Caco-2 (cell line): ENCODE measurements at regions of chrX and their contacts with region 1.

Region 1: GRCh38 chrX:135050603-135051002 is 1.3 kb downstream of the RTL8A start:
- DNase-seq: no peak
- H3K4me3 ChIP-seq: no peak overlapping the region; the same call in 1 of the 2 replicates
- H3K4me3 Mint-ChIP-seq: peak overlapping the region; percentile 96
- H3K27ac Mint-ChIP-seq: peak overlapping the region; percentile 90
- H3K4me1 ChIP-seq: 0 out of 2 replicates have a peak, but pooled peaks cover 4% of the 10 kb centered on the region
- H3K4me1 Mint-ChIP-seq: peaks cover 15% of the 10 kb centered on the region
- H3K27me3 ChIP-seq: no peaks in the 10 kb centered on the region
- H3K27me3 Mint-ChIP-seq: no peaks in the 10 kb centered on the region
- CTCF ChIP-seq: no peak

Region 2: DNA sequence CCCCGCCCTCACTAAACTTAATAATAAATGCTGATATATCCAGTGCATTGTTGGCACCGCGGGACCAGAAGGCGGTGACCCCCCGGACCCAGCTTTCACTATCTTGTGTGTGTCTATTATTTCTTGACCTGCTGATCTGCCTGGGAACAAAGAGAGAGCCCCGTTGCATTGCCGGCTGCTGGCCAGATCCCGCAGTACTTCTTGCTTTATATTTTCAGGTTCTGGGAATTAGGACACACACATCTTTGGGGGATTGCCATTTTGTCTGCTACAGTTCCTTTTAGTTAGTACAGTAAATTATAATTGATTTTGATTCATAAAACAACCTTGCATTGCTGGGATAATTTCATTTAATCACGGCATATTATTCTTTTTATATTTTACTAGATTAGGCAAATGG is 26.1 kb before region 1 on chrX:
- CTCF ChIA-PET with region 1: no interaction called
- POLR2A ChIA-PET with region 1: interaction called, 11 read pairs
- intact Hi-C with region 1: no loop called
- DNase-seq: no peak
- H3K4me3 ChIP-seq: no peak overlapping the region
- H3K4me3 Mint-ChIP-seq: no peak overlapping the region
- H3K27ac Mint-ChIP-seq: no peak overlapping the region
- H3K4me1 ChIP-seq: peaks cover 11% of the 10 kb centered on the region
- H3K4me1 Mint-ChIP-seq: peaks cover 6% of the 10 kb centered on the region
- H3K27me3 ChIP-seq: no peaks in the 10 kb centered on the region
- H3K27me3 Mint-ChIP-seq: no peaks in the 10 kb centered on the region
- CTCF ChIP-seq: no peak